Mammary epithelial cell (primary cell): ENCODE measurements at regions of chr4 and their contacts with region 1.

Region 1: DNA sequence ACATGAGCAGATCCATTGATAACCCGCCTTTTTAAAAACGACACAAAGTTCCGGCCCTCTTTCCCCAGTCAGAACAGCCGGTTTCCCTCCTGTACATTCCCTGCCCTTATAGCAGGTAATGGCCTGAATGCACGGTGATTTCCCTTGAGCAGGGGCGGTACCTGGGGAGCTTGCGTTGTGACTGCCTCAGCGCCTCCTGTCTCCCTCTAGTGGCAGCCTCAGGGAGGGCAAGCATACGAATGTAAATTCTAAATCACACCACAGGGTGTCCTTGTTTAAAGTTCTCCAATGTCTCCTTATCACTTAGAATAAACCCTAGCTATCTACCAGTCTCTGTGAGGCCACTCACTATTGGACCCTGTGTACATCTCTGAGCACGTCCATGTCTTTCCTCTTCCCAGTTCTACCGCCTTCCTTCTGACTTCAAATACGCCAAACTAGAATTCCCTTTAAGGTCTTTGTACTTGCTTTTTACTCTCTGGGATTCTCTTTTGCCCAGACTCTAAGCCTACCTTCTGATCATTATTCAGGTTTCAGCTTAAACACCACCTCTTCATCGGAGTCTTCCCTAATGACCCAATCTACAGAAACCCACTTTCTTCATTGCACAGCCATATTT is 18.4 kb upstream of the LDB2 start:
- DNase-seq: peak; percentile 12
- H3K4me3 ChIP-seq: no peak overlapping the region
- H3K27ac ChIP-seq: no peak overlapping the region
- H3K4me1 ChIP-seq: no peaks in the 10 kb centered on the region
- H3K27me3 ChIP-seq: no peaks in the 10 kb centered on the region
- CTCF ChIP-seq: peak; percentile 74 to 75

Region 2: DNA sequence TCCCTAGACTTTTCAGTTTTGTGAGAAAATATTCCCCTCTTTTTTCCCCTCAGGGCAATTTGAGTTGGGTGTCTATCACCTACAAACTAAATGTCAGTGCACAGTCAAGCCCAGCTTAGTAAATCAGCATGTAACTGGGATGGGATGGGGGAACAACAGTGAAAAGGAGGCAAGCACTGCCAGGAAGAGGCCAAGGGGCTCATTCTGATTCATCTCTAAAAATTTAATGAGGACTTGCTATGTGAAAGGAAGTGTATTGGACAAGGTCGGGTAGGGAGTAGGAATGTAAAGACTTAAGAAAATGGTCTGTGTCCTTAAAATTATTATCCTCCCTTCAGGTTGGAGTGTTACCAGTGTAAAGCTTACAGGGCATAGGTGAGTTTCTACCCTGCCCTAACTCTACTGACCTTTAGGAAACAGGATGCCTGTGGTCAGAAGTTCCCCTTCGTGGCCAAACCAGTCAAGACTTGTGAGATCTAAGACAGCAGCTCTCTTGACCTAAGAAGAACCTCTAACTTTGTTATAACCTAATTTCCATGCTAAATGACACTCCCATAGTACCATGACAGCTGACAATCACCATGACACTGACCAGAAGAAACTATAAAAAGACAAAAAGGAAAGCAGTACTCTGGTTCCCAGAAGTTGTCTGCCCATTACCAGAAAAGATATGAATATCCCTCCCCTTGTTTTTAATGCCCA is 176.1 kb after region 1 on chr4:
- CTCF ChIA-PET with region 1: no interaction called
- dilution Hi-C with region 1: no loop called
- in situ Hi-C with region 1: no loop called
- intact Hi-C with region 1: loop called (anchors 10 kb)
- DNase-seq: no peak
- H3K4me3 ChIP-seq: no peak overlapping the region
- H3K27ac ChIP-seq: no peak overlapping the region
- H3K4me1 ChIP-seq: no peaks in the 10 kb centered on the region
- H3K27me3 ChIP-seq: no peaks in the 10 kb centered on the region
- CTCF ChIP-seq: no peak

Region 3: GRCh38 chr4:17324386-17324830 is 407.6 kb after region 1 on chr4:
- CTCF ChIA-PET with region 1: no interaction called
- dilution Hi-C with region 1: no loop called
- in situ Hi-C with region 1: no loop called
- intact Hi-C with region 1: loop called (anchors 5 kb)
- DNase-seq: no peak
- H3K4me3 ChIP-seq: no peak overlapping the region
- H3K27ac ChIP-seq: no peak overlapping the region
- H3K4me1 ChIP-seq: no peaks in the 10 kb centered on the region
- H3K27me3 ChIP-seq: no peaks in the 10 kb centered on the region
- CTCF ChIP-seq: peak; percentile 40 to 54

Region 4: DNA sequence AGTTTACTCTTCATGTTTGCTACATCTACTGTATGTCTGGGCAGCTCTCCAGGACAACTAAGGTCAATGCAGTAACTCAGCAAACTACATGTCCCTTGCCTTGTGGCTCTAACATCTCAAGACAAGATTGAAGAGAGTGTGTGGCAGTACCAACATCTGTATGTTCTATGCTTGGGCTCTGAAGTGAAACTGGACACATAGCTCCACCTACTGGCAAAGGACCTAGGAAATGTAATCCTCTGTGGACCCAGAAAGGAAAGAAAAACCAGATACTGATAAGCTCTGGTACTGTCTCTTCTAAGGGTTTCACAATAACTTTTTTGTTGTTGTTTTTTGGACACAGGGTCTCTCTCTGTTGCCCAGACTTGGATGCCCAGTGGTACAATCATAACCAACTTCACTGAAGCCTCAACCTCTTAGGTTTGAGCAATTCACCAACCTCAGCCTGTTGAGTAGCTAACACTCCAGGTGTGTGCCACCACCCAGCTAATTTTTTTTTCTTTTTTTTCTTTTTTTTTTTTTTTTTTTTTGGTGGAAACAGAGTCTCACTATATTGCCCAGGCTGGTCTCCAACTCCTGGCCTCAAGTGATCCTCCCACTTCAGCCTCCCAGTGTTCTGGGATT is 531.0 kb after region 1 on chr4:
- CTCF ChIA-PET with region 1: no interaction called
- dilution Hi-C with region 1: no loop called
- in situ Hi-C with region 1: no loop called
- intact Hi-C with region 1: loop called (anchors 2 kb)
- DNase-seq: peak; percentile 51
- H3K4me3 ChIP-seq: no peak overlapping the region
- H3K27ac ChIP-seq: no peak overlapping the region
- H3K4me1 ChIP-seq: no peaks in the 10 kb centered on the region
- H3K27me3 ChIP-seq: no peaks in the 10 kb centered on the region
- CTCF ChIP-seq: peak; percentile 71 to 81